Activated T-helper 2 cell treated with anti-CD3 and anti-CD28 coated beads, Interferon-gamma antibody, Interleukin-2, Interleukin-4, amounts not matched to agents 10 μg/mL and 5 μg/mL and 100 μg/mL, durations not matched to agents 14 hours and 24 hours and 36 hours (primary cell): ENCODE measurements at regions of chr3 and their contacts with region 1.

Region 1: GRCh38 chr3:56758539-56758981 is 43.2 kb downstream of the ARHGEF3 start:
- DNase-seq: peak; percentile 40
- H3K4me3 Mint-ChIP-seq: peak overlapping the region; percentile 68
- H3K27ac Mint-ChIP-seq: peak overlapping the region; percentile 91
- H3K4me1 Mint-ChIP-seq: peaks cover 71% of the 10 kb centered on the region
- H3K27me3 Mint-ChIP-seq: no peaks in the 10 kb centered on the region

Region 2: GRCh38 chr3:56702490-56703315 is 55.9 kb before region 1 on chr3:
- intact Hi-C with region 1: loop called (anchors 5 kb)
- DNase-seq: peak; percentile 29
- H3K4me3 Mint-ChIP-seq: no peak overlapping the region
- H3K27ac Mint-ChIP-seq: no peak overlapping the region
- H3K4me1 Mint-ChIP-seq: peaks cover 22% of the 10 kb centered on the region
- H3K27me3 Mint-ChIP-seq: no peaks in the 10 kb centered on the region

Region 3: GRCh38 chr3:56783644-56784447 is 25.3 kb after region 1 on chr3:
- intact Hi-C with region 1: loop called (anchors 1 kb)
- DNase-seq: peak; percentile 70
- H3K4me3 Mint-ChIP-seq: peak overlapping the region; percentile 76
- H3K27ac Mint-ChIP-seq: peak overlapping the region; percentile 95
- H3K4me1 Mint-ChIP-seq: peaks cover 80% of the 10 kb centered on the region
- H3K27me3 Mint-ChIP-seq: no peaks in the 10 kb centered on the region

Region 4: GRCh38 chr3:56923521-56924224 is 165.1 kb after region 1 on chr3:
- intact Hi-C with region 1: no loop called
- DNase-seq: peak; percentile 37
- H3K4me3 Mint-ChIP-seq: peak overlapping the region; percentile 31
- H3K27ac Mint-ChIP-seq: peak overlapping the region; percentile 83
- H3K4me1 Mint-ChIP-seq: peaks cover 61% of the 10 kb centered on the region
- H3K27me3 Mint-ChIP-seq: no peaks in the 10 kb centered on the region

Region 5: GRCh38 chr3:56980798-56981390 is 222.3 kb after region 1 on chr3:
- intact Hi-C with region 1: loop called (anchors 5 kb)
- DNase-seq: peak; percentile 22
- H3K4me3 Mint-ChIP-seq: no peak overlapping the region
- H3K27ac Mint-ChIP-seq: peak overlapping the region; percentile 72
- H3K4me1 Mint-ChIP-seq: peaks cover 26% of the 10 kb centered on the region
- H3K27me3 Mint-ChIP-seq: no peaks in the 10 kb centered on the region

Region 6: GRCh38 chr3:57120040-57120439 is 361.5 kb after region 1 on chr3:
- intact Hi-C with region 1: no loop called
- DNase-seq: no peak
- H3K4me3 Mint-ChIP-seq: no peak overlapping the region
- H3K27ac Mint-ChIP-seq: no peak overlapping the region
- H3K4me1 Mint-ChIP-seq: no peaks in the 10 kb centered on the region
- H3K27me3 Mint-ChIP-seq: peaks cover 14% of the 10 kb centered on the region